K562 (cell line): ENCODE measurements at regions of chr7 and their contacts with region 1.

Region 1: DNA sequence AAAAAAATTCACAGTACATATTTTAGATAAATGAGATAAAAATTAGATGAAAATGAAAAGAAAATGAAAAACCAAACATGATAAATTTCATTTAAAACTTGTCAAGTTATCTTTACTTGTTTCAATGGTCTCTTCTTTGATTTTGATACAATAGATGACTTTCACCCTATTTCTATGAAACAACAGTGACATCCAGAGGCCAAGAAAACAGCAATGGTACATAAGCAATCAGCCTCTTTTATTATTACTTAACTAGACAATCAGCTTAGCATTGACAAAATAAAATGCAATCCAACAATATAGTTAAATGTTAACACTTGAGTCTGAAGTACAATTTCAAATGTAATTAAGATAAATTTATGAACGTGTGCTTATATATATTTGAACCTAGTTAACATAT is 74.8 kb upstream of the GPR37 start:
- DNase-seq: peak in 1 of 4 experiments; percentile 11
- ATAC-seq: no peak
- H3K4me3 ChIP-seq: no peak overlapping the region
- H3K27ac ChIP-seq: no peak overlapping the region
- H3K4me1 ChIP-seq: no peaks in the 10 kb centered on the region
- H3K27me3 ChIP-seq: no peaks in the 10 kb centered on the region
- CTCF ChIP-seq: peak in 1 of 3 experiments; percentile 26; a peak in 1 of 6 replicates
- EP300 ChIP-seq: no peak
- POLR2A ChIP-seq: no peak
- RAD21 ChIP-seq: peak; percentile 35 to 50; a peak in 3 of 4 replicates

Region 2: DNA sequence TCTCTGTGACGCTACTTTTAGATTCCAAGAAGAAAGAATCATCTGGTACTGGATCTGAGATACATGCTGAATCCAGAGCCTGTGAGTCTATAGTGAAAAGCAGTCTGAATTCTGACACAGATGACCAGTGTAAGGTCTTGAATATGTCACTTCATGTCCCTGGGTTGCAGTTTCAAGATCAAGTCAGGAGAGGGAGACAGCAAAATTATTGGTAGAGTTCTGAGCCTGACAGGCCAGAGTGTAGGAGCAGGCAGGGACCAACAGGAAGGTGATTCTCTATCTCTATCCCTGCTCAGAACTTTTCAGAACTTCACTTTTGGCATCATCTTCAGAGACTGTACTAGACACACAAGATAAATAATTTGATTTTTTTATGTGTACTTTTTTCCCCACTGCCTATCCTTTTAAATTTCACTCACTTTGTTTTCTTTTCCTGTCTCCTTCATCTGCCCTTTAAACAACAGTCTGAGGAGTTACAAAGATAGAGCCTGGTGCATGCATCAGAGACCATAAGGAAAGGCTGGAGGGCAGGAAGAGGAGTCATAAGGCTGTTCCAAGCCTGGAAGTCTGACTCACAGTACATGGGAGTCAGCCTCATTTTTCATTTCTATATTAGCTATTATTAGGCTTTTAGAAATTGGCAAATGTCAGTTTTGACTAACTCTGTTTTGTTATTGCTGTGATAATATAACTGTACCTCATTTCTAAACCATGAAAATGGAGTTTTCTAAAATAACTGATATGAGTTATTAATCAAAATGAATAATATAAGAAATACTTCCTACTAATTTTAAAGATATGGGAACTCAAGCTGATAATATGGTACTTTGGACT is 687.4 kb before region 1 on chr7:
- CTCF ChIA-PET with region 1: no interaction called
- POLR2A ChIA-PET with region 1: no interaction called
- in situ Hi-C with region 1: no loop called
- intact Hi-C with region 1: loop called (anchors 10 kb)
- DNase-seq: peak in 1 of 4 experiments; percentile 9
- ATAC-seq: no peak
- H3K4me3 ChIP-seq: no peak overlapping the region
- H3K27ac ChIP-seq: no peak overlapping the region
- H3K4me1 ChIP-seq: no peaks in the 10 kb centered on the region
- H3K27me3 ChIP-seq: no peaks in the 10 kb centered on the region
- CTCF ChIP-seq: no peak
- EP300 ChIP-seq: no peak
- POLR2A ChIP-seq: no peak
- RAD21 ChIP-seq: peak; percentile 50 to 78

Region 3: DNA sequence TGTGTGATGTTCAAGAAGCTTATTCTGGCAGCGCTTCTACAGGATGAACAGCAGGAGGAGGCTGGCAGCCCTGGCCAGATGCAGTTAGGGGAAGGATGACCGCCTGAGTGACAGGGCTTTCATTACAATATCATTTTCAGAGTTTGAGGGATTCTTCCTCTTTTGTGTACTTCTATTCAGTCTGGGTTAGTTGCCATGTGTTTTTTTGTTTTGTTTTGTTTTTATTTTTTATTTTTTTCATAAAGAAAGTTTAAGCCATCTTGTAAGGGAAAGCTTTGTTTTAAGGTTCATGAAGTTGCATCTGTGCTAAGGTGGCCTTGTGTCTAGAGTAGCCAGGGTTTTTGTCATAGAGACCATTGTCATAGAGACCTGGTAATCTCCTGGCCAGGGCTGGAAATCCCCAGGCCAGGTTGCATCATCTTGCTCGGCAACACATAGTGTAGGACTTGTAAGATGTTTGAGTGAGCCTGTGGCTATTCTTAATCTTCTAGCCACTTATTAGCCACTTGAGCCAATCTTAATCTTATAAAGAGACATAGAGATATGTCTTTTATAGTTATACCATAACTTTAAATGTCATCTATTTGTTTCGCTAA is 577.1 kb before region 1 on chr7:
- CTCF ChIA-PET with region 1: no interaction called
- POLR2A ChIA-PET with region 1: no interaction called
- in situ Hi-C with region 1: no loop called
- intact Hi-C with region 1: no loop called
- DNase-seq: peak in 1 of 4 experiments; percentile 3
- ATAC-seq: peak; percentile 63
- H3K4me3 ChIP-seq: no peak overlapping the region
- H3K27ac ChIP-seq: no peak overlapping the region
- H3K4me1 ChIP-seq: no peaks in the 10 kb centered on the region
- H3K27me3 ChIP-seq: no peaks in the 10 kb centered on the region
- CTCF ChIP-seq: no peak
- EP300 ChIP-seq: no peak
- POLR2A ChIP-seq: no peak
- RAD21 ChIP-seq: peak; percentile 20 to 33; a peak in 2 of 4 replicates

Region 4: DNA sequence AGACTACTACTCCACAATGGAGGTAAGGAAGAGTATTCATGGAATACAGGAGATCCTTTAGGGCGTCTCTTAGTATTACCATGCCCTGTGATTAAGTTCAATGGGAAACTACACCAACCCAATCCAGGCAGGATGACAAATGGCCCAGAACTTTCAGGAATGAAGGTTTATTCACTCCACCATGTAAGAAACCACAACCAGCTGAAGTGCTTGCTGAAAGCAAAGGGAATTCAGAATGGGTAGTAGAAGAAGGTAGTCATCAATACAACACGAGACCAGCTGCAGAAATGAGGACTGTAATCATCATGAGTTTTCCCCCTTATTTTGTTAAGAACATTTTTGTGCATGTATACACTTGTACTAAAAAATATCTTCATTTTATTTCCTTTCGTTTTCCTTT is 151.4 kb before region 1 on chr7:
- CTCF ChIA-PET with region 1: no interaction called
- POLR2A ChIA-PET with region 1: no interaction called
- in situ Hi-C with region 1: no loop called
- intact Hi-C with region 1: no loop called
- DNase-seq: no peak
- ATAC-seq: no peak
- H3K4me3 ChIP-seq: no peak overlapping the region
- H3K27ac ChIP-seq: no peak overlapping the region
- H3K4me1 ChIP-seq: no peaks in the 10 kb centered on the region
- H3K27me3 ChIP-seq: no peaks in the 10 kb centered on the region
- CTCF ChIP-seq: no peak
- EP300 ChIP-seq: no peak
- POLR2A ChIP-seq: no peak
- RAD21 ChIP-seq: no peak